Mammary epithelial cell (primary cell): ENCODE measurements at regions of chr4 and their contacts with region 1.

Region 1: GRCh38 chr4:148868212-148868611 is 426.0 kb upstream of the NR3C2 start:
- DNase-seq: no peak
- H3K4me3 ChIP-seq: no peak overlapping the region
- H3K27ac ChIP-seq: no peak overlapping the region
- H3K4me1 ChIP-seq: no peaks in the 10 kb centered on the region
- H3K27me3 ChIP-seq: no peaks in the 10 kb centered on the region
- CTCF ChIP-seq: no peak

Region 2: DNA sequence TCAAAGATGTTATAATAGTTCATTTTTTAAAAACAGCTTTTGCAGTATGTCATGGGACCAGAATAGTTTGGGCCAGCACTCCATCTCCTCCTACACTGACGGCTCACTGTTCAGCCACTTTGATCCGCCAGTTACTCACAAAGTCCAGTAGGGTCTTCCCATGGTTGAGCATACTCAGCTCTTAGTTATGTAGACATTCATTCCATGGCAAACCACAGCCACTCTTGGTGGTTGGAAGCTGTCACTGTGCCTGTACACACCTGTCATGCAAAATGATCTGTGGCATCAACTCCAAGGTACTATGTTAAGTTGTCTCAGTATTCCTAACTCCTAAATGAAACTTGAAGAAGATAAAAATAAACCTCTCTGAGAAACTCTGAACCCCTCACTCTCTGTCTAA is 553.2 kb before region 1 on chr4:
- CTCF ChIA-PET with region 1: no interaction called
- dilution Hi-C with region 1: no loop called
- in situ Hi-C with region 1: no loop called
- intact Hi-C with region 1: no loop called
- DNase-seq: peak; percentile 28
- H3K4me3 ChIP-seq: no peak overlapping the region
- H3K27ac ChIP-seq: no peak overlapping the region
- H3K4me1 ChIP-seq: no peaks in the 10 kb centered on the region
- H3K27me3 ChIP-seq: no peaks in the 10 kb centered on the region
- CTCF ChIP-seq: no peak

Region 3: DNA sequence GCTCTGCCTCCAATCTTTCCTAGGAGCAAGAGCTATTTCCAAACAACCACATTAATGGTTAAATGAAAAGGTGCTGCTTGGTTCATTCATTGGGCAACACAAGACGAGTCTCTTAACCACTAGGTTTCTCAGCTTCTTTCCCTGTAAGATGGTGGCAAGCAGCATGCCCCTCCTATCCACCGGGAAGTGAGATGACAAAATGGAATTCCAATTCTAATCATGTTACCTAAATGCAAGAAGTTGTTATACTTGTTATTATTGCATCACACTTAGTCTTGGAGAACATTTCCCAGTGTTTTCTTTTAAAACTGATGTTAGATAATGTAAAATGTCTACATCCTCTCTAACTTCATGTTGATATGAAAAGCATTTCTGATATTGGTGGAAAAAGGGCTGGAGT is 185.7 kb before region 1 on chr4:
- CTCF ChIA-PET with region 1: no interaction called
- dilution Hi-C with region 1: no loop called
- in situ Hi-C with region 1: no loop called
- intact Hi-C with region 1: no loop called
- DNase-seq: no peak
- H3K4me3 ChIP-seq: no peak overlapping the region
- H3K27ac ChIP-seq: no peak overlapping the region
- H3K4me1 ChIP-seq: no peaks in the 10 kb centered on the region
- H3K27me3 ChIP-seq: no peaks in the 10 kb centered on the region
- CTCF ChIP-seq: no peak

Region 4: DNA sequence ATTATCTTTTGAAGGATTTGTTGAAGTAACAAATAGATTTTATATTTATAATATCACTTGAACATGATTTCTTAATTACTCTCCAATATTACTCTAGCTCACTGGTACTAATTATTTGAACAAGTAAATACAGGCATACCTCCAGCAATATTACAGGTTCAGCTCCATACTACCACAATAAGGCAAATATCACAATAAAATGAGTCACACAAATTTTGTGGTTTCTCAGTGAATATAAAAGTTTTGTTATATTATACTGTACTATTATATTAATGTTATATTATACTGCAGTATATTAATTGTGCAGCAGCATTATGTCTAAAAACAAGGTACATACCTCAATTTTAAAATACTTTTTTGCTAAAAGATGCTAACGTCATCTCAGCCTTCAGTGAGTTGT is 969.8 kb after region 1 on chr4:
- CTCF ChIA-PET with region 1: interaction called, 12 read pairs
- dilution Hi-C with region 1: no loop called
- in situ Hi-C with region 1: no loop called
- intact Hi-C with region 1: no loop called
- DNase-seq: peak; percentile 24
- H3K4me3 ChIP-seq: no peak overlapping the region
- H3K27ac ChIP-seq: no peak overlapping the region
- H3K4me1 ChIP-seq: no peaks in the 10 kb centered on the region
- H3K27me3 ChIP-seq: no peaks in the 10 kb centered on the region
- CTCF ChIP-seq: no peak